MCF 10A (cell line): ENCODE measurements at regions of chr7 and their contacts with region 1.

Region 1: DNA sequence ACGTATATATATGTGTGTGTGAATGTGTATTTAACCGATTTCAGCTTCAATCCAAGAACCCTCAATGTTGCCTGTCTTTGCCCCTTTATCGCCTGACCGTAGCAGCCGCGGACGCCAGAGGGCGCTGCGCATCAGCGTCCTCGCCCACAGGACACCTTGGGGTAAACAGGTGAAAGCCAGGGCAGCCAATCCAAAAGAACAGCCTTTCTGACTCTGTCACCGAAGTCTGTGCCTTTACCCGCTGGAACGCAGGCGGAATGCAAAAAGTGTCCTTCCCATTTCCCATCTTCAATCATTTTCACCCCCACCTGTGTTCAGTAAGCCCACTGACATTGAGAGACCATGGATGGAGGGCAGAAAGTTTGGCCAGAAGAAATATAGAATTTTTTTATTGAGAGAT is 3.6 kb downstream of the NXPH1 start:
- DNase-seq: peak; percentile 65
- H3K4me3 Mint-ChIP-seq: no peak overlapping the region
- H3K27ac Mint-ChIP-seq: no peak overlapping the region
- H3K4me1 Mint-ChIP-seq: peaks cover 5% of the 10 kb centered on the region
- H3K27me3 Mint-ChIP-seq: peaks cover 69% of the 10 kb centered on the region
- CTCF ChIP-seq: peak; percentile 67

Region 2: DNA sequence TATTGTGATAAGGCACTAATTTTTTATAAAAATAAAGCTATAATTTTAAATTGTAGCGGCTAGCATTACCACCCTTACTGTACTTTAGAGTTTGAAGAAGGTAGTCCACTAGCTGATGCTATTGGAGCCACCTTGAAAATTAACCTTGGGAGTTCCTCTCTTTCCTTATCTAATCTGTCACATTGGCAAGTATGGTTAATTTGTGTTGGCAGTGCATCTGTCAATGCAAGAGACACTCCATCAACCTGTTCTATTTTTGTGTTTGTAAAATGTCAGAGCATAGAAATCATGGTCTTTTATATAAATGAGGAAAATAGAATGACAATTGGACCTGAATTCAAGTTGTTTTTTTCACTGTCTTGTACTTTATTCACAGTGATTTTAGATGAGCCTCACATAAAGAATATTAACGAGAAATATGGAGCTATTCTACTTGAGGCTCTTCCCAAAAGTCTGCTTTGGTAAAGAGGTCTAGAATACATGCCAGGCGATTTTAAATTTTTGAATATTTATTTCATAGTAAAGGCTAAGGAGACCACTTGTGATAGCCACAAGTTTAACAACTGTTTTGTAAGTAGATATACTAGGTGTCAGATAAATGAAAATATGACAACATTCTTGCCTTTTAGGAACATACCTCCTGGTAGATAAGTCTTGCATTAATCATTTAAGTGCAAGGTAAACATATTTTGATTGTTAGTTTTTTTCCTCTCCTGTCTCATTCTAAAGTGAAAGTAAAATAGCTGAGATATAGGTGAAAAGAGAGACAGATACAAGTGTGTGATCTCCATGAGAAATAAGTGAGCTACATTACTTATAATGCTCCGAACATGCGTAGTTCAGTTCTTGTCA is 447.6 kb before region 1 on chr7:
- CTCF ChIA-PET with region 1: no interaction called
- POLR2A ChIA-PET with region 1: no interaction called
- intact Hi-C with region 1: no loop called
- DNase-seq: no peak
- H3K4me3 Mint-ChIP-seq: peak overlapping the region; percentile 26
- H3K27ac Mint-ChIP-seq: peak overlapping the region; percentile 32
- H3K4me1 Mint-ChIP-seq: peaks cover 6% of the 10 kb centered on the region
- H3K27me3 Mint-ChIP-seq: no peaks in the 10 kb centered on the region
- CTCF ChIP-seq: no peak

Region 3: DNA sequence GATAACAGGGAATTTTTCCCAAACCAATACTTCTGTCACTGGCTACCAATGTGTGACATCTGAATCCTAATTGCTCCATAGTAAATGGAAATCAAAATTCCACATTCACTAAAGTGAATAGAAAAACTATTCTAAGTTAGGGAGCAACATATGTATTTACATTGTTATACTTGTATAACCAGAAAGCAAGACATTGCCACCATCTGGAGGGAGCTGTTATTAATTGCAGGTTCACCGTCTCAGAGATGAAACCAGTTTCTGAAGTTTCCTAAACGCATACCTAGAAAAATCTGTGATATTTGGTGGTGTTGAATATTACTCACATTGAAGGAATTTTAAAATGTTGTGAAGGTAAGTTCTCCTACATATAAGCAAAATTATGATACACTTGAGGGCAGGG is 386.5 kb after region 1 on chr7:
- CTCF ChIA-PET with region 1: no interaction called
- POLR2A ChIA-PET with region 1: no interaction called
- intact Hi-C with region 1: loop called (anchors 10 kb)
- DNase-seq: peak; percentile 3
- H3K4me3 Mint-ChIP-seq: no peak overlapping the region
- H3K27ac Mint-ChIP-seq: no peak overlapping the region
- H3K4me1 Mint-ChIP-seq: no peaks in the 10 kb centered on the region
- H3K27me3 Mint-ChIP-seq: peaks cover 47% of the 10 kb centered on the region
- CTCF ChIP-seq: no peak

Region 4: DNA sequence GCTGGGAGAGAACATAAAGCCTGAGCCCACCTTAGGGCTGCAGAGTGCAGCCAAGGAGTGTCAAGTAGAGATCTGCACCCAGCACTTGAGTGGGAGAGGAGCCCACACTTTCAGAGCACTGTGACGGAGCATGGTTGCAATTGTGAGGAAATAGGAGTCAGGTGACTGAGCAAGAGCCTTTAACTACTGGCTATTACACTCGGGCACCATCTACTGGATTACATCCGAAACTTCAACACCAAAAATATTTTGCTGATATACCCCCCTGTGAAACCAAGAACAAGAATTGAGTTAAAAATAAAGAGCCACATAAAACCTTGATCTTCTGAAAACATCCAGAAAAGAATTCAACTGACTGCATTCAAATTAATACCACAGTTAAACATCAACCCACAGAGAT is 654.3 kb after region 1 on chr7:
- CTCF ChIA-PET with region 1: interaction called, 4 read pairs
- POLR2A ChIA-PET with region 1: no interaction called
- intact Hi-C with region 1: loop called (anchors 1 kb)
- DNase-seq: peak; percentile 53
- H3K4me3 Mint-ChIP-seq: no peak overlapping the region
- H3K27ac Mint-ChIP-seq: no peak overlapping the region
- H3K4me1 Mint-ChIP-seq: no peaks in the 10 kb centered on the region
- H3K27me3 Mint-ChIP-seq: peaks cover under 1% of the 10 kb centered on the region
- CTCF ChIP-seq: peak; percentile 52